ENCODE measurements at regions of chr20 and their contacts with region 1.

Region 1: GRCh38 chr20:31723319-31724078 is 831 bp upstream of the BCL2L1 start:
- H3K4me3 ChIP-seq: peak overlapping the region; percentile 94
- H3K27ac ChIP-seq: peak overlapping the region; percentile 95
- H3K4me1 ChIP-seq: peaks cover 8% of the 10 kb centered on the region; the same call in 1 of the 2 replicates
- CTCF ChIP-seq: peak; percentile 81

Region 2: GRCh38 chr20:31572701-31573554 is 150.6 kb before region 1 on chr20:
- CTCF ChIA-PET with region 1: interaction called, 14 read pairs
- POLR2A ChIA-PET with region 1: interaction called, 6 read pairs
- H3K4me3 ChIP-seq: peak overlapping the region; percentile 41
- H3K27ac ChIP-seq: peak overlapping the region; percentile 88
- H3K4me1 ChIP-seq: peaks cover 8% of the 10 kb centered on the region
- CTCF ChIP-seq: no peak

Region 3: DNA sequence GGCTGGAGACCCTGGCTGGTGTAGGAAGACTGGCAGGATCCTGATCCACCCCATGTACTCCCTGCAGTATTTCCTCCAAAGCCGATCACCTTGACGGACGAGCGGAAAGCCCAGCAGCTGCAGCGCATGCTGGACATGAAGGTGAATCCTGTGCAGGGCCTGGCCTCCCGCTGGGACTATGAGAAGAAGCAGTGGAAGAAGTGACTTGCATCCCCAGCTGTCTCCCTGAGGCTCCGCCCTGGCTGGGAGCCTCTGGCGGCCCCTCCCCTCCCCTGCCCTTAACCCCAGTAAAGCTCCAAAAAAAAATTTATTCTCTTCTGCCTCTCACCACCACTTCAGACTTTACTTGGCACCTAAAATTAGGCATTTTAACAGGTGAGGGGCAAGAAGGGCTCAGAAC is 78.8 kb before region 1 on chr20:
- CTCF ChIA-PET with region 1: interaction called, 12 read pairs
- POLR2A ChIA-PET with region 1: no interaction called
- H3K4me3 ChIP-seq: no peak overlapping the region
- H3K27ac ChIP-seq: no peak overlapping the region
- H3K4me1 ChIP-seq: no peaks in the 10 kb centered on the region
- CTCF ChIP-seq: no peak

Region 4: GRCh38 chr20:31674895-31675827 is 48.3 kb before region 1 on chr20:
- CTCF ChIA-PET with region 1: interaction called, 38 read pairs
- POLR2A ChIA-PET with region 1: interaction called, 4 read pairs
- H3K4me3 ChIP-seq: no peak overlapping the region
- H3K27ac ChIP-seq: peak overlapping the region; percentile 0; the same call in 1 of the 2 replicates
- H3K4me1 ChIP-seq: peaks cover 14% of the 10 kb centered on the region
- CTCF ChIP-seq: no peak

Region 5: GRCh38 chr20:31704225-31705119 is 19.0 kb before region 1 on chr20:
- CTCF ChIA-PET with region 1: interaction called, 40 read pairs
- POLR2A ChIA-PET with region 1: interaction called, 9 read pairs
- H3K4me3 ChIP-seq: no peak overlapping the region
- H3K27ac ChIP-seq: no peak overlapping the region
- H3K4me1 ChIP-seq: no peaks in the 10 kb centered on the region
- CTCF ChIP-seq: no peak

Measured in HEK293 (cell line).